Activated CD4-positive, alpha-beta T cell treated with anti-CD3 and anti-CD28 coated beads for 36 hours (primary cell): ENCODE measurements at regions of chr5 and their contacts with region 1.

Region 1: DNA sequence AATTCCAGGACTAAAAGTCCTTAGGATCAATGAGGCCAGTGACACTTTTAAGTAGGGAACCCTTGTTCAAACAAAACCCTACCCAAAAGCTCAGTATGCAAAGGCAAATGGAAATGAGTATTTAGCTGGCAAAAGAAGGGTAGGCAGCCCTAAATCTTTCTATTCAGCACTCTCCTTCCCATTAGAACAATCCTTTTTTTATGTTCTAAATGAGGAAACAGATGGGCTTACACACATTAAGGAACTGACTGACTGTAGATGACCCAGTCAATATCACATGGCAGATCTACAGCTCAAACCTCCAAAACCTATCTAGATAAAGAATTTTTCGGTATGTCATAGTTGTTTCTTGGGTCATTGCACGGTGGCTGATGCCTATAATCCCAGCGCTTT is 7.2 kb downstream of the CSNK1A1 start:
- DNase-seq: no peak
- ATAC-seq: no peak
- H3K4me3 Mint-ChIP-seq: no peak overlapping the region
- H3K27ac Mint-ChIP-seq: no peak overlapping the region
- H3K4me1 Mint-ChIP-seq: peaks cover 69% of the 10 kb centered on the region
- H3K27me3 Mint-ChIP-seq: no peaks in the 10 kb centered on the region

Region 2: DNA sequence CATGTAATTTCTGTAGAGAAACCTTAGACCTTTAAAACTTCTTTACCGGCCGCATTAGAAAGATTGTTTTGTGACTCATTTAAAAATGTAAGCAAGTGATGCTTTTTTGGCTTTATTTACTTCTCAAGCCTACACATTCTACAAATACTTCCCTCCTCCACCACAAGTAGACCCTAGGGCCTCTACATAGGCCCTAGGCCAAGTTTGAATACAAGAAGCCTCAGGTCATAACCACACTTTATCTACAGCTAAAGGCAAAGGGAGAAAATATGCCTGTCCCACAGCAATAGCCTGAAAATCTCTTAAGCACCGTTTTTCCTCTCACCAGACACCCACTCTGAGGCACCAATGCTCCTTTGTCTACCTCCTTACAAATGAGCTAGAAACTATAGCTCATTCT is 46.7 kb before region 1 on chr5:
- CTCF ChIA-PET with region 1: no interaction called
- POLR2A ChIA-PET with region 1: no interaction called
- intact Hi-C with region 1: loop called in 1 of 2 experiments (anchors 5 kb)
- DNase-seq: no peak
- ATAC-seq: no peak
- H3K4me3 Mint-ChIP-seq: no peak overlapping the region
- H3K27ac Mint-ChIP-seq: peak overlapping the region; percentile 37
- H3K4me1 Mint-ChIP-seq: no peaks in the 10 kb centered on the region
- H3K27me3 Mint-ChIP-seq: no peaks in the 10 kb centered on the region